ENCODE measurements at regions of chr1 and their contacts with region 1.

Region 1: GRCh38 chr1:161132410-161133219 is at the start of gene DEDD:
- DNase-seq: peak; percentile 90 to 96
- H3K4me3 ChIP-seq: peak within 1 kb of the TSS; percentile 71 to 97 (median 84)
- H3K27ac ChIP-seq: peak within 1 kb of the TSS; percentile 95
- H3K4me1 ChIP-seq: no peaks in the 10 kb centered on the region; a peak in 1 of 7 replicates
- H3K27me3 ChIP-seq: no peaks in the 10 kb centered on the region
- CTCF ChIP-seq: peak in 1 of 3 experiments; percentile 31; a peak in 1 of 4 replicates
- EP300 ChIP-seq: no peak; a peak in 1 of 3 replicates
- POLR2A ChIP-seq: peak; percentile 59 to 71
- RAD21 ChIP-seq: no peak
- total RNA-seq, gene DEDD: 42.0 and 42.6 TPM in 2 replicates

Region 2: GRCh38 chr1:161032409-161032808 is 100.2 kb before region 1 on chr1:
- CTCF ChIA-PET with region 1: no interaction called
- POLR2A ChIA-PET with region 1: no interaction called
- DNase-seq: no peak
- H3K4me3 ChIP-seq: no peak overlapping the region
- H3K27ac ChIP-seq: no peak overlapping the region
- H3K4me1 ChIP-seq: peaks cover 2 to 5% (median 3%) of the 10 kb centered on the region in 4 experiments; a peak in 4 of 7 replicates
- H3K27me3 ChIP-seq: no peaks in the 10 kb centered on the region
- CTCF ChIP-seq: no peak
- EP300 ChIP-seq: no peak
- POLR2A ChIP-seq: no peak
- RAD21 ChIP-seq: no peak

Region 3: DNA sequence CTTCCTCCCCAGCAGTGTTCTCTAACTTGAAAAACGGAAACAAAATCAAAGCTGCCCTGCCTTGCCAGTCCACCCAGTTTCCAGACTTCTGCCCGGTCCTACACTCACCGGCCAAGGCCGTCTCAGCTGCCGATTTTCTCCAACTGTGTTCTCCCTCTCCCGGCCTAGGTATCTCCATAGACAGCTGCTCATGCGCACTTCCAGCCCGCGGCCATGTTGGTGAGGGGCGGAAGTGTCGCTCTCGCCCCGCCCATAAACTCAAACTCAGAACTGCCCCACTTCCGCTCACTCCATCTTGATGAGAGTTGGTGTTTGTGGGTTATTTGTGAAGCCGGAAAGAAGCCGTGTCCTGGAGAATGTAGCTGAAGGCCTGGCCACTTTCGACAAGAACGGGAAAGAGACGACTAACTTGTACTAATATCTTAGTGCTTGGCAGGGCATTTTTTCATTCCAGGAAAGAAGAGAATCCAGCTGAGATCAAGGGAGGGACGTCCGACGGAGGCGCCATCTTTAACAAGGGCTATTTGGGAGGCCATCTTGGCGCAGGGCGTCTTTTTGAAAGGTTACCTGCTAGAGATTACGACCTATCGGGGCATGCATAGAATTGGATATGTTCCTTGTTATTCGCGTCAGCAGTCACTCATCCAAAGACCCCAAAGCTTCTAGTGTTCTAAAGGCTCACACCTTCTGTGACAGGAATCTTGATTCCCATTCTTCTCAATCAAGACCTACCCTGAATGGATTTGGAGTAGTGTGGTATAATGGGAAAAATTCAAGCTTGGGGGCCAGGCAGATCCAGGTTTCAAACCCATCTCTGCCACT is 86.7 kb before region 1 on chr1 and contains the start of gene USF1:
- CTCF ChIA-PET with region 1: interaction called, 5 read pairs
- POLR2A ChIA-PET with region 1: interaction called, 19 read pairs
- DNase-seq: peak; percentile 86 to 93
- H3K4me3 ChIP-seq: peak within 1 kb of the TSS; percentile 75 to 98 (median 87)
- H3K27ac ChIP-seq: peak within 1 kb of the TSS; percentile 97
- H3K4me1 ChIP-seq: peaks cover 0 to 4% (median 1%) of the 10 kb centered on the region in 4 experiments; a peak in 2 of 7 replicates
- H3K27me3 ChIP-seq: peaks cover 0 to 17% (median 8%) of the 10 kb centered on the region in 4 experiments; a peak in 6 of 7 replicates
- CTCF ChIP-seq: no peak
- EP300 ChIP-seq: no peak
- POLR2A ChIP-seq: peak; percentile 78 to 96
- RAD21 ChIP-seq: no peak
- total RNA-seq, gene USF1: 68.9 and 74.6 TPM in 2 replicates

Region 4: GRCh38 chr1:161159087-161159912 is 26.7 kb after region 1 on chr1 and contains the start of gene USP21:
- CTCF ChIA-PET with region 1: interaction called, 29 read pairs
- POLR2A ChIA-PET with region 1: interaction called, 130 read pairs
- DNase-seq: peak; percentile 77 to 97
- H3K4me3 ChIP-seq: peak within 1 kb of the TSS; percentile 62 to 80 (median 72)
- H3K27ac ChIP-seq: peak within 1 kb of the TSS; percentile 63
- H3K4me1 ChIP-seq: peaks cover 0 to 15% (median 4%) of the 10 kb centered on the region in 4 experiments; a peak in 4 of 7 replicates
- H3K27me3 ChIP-seq: no peaks in the 10 kb centered on the region
- CTCF ChIP-seq: peak; percentile 3 to 34 (median 29)
- EP300 ChIP-seq: no peak
- POLR2A ChIP-seq: peak in 1 of 2 experiments; percentile 34; a peak in 2 of 3 replicates
- RAD21 ChIP-seq: no peak
- total RNA-seq, gene USP21: 23.9 and 28.2 TPM in 2 replicates

Region 5: DNA sequence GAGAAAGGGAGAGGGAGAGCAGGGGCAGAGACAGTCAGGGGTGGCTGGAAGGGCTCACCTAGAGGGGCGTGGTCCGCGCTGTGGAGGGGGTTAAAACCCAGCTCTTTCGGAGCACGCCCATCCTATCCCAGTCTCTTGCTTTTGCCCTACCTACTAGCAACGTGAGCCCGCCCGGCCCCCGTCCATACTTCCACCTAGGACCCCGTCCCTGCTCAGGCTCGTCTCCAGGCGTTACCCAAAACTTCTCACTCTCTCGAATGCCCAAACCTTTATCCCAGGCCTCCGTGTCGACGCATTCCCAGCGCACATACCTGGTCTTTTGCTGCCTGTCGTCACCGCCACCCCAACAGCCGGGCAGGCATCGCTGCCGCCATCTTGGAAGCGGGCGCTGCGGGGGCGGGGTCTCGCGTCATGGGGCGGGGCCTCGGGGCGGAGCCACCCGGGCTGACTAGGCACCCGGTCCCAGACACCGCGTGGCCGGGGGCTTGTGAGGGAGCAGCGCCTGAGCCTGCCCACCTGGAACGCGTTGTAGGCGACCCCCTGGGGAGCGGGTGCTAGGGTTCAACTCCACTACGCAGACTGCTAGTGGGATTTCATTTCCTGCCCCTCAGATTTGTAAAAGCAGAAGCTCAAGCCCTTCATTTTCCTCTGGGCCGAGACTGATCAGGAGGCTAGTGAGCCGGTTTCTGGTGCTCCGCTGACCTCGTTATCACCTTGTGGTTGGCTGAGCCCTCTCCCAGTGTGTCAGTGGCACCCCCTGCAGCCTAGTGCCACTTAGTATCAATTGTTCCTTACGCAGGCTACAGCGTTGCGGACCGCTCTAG is 44.7 kb after region 1 on chr1 and contains the start of gene B4GALT3:
- CTCF ChIA-PET with region 1: interaction called, 3 read pairs
- POLR2A ChIA-PET with region 1: interaction called, 11 read pairs
- DNase-seq: peak in 1 of 2 experiments; percentile 100
- H3K4me3 ChIP-seq: peak within 1 kb of the TSS; percentile 66 to 96 (median 84)
- H3K27ac ChIP-seq: peak within 1 kb of the TSS; percentile 88
- H3K4me1 ChIP-seq: peaks cover 0 to 13% (median under 1%) of the 10 kb centered on the region in 4 experiments; a peak in 3 of 7 replicates
- H3K27me3 ChIP-seq: no peaks in the 10 kb centered on the region
- CTCF ChIP-seq: peak; percentile 32 to 40 (median 38); a peak in 3 of 4 replicates
- EP300 ChIP-seq: no peak
- POLR2A ChIP-seq: peak; percentile 89 to 97
- RAD21 ChIP-seq: peak in 1 of 2 experiments; percentile 23; a peak in 2 of 4 replicates
- total RNA-seq, gene B4GALT3: 42.3 and 45.5 TPM in 2 replicates

Region 6: DNA sequence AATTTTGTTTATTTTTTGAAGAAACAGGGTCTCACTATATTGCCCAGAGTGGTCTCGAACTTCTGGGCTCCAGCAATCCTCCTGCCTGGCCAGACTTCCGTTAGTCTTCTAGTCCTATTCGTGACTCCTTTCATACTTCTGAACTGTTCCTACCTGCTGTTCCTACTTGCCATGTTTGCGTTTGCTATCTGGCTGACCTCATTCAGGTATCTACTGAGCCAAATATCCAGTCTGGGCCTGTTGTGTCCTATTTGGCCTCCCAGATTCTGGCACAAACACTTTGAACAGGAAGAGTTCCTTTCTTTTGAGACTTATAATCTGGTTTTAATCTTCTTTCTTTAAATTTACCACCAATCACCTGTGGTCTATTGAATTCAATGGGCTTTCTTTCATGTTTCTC is 112.3 kb after region 1 on chr1:
- CTCF ChIA-PET with region 1: no interaction called
- POLR2A ChIA-PET with region 1: no interaction called
- DNase-seq: no peak
- H3K4me3 ChIP-seq: no peak overlapping the region
- H3K27ac ChIP-seq: no peak overlapping the region
- H3K4me1 ChIP-seq: no peaks in the 10 kb centered on the region
- H3K27me3 ChIP-seq: no peaks in the 10 kb centered on the region
- CTCF ChIP-seq: no peak
- EP300 ChIP-seq: no peak
- POLR2A ChIP-seq: no peak
- RAD21 ChIP-seq: no peak